Heart right ventricle (tissue), 16 donors: ENCODE measurements at regions of chr1 and their contacts with region 1.

Region 1: GRCh38 chr1:21685946-21686678 is 17.0 kb upstream of the RAP1GAP start:
- DNase-seq: no peak
- ATAC-seq: no peak
- H3K4me3 ChIP-seq: no peak overlapping the region
- H3K27ac ChIP-seq: no peak overlapping the region
- H3K4me1 ChIP-seq: no peaks in the 10 kb centered on the region
- H3K27me3 ChIP-seq: no peaks in the 10 kb centered on the region
- CTCF ChIP-seq: no peak

Region 2: DNA sequence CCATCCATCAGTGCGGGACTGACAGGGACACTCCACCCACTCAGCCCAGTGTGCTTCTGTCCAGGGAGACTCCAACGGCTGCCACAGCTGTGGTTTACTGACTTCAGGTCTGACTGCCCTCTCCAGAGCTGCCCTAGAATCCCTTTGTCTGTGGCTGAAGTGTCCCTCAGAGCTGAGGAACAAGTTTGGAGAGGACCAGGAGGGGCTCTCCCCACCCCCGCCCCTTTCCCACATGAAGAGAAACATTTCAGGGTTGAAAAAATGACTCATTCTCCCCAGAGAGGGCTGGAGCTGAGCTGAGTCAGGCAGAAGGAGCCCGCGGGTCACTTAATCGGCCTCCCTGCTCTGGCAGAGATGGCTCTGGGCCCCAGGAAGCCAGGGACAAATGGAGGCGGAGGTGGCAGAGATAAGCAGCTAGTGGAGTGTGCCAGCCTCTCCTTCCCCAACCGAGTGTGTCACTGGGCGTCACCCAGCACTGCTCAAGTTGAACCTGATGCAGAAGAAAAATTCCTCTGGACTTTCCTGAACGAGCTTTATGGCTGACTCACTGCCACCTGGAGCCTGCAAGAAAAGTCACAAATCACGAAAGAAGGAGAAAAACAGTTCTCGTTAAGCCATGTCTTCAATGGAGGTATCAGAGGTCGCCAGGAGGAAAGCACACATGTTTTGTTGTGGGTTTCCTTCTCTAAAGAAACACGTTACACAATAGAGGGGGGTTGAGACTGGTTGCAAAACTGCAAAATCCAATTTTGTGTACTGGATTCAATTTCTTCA is 361.6 kb before region 1 on chr1:
- intact Hi-C with region 1: no loop called
- DNase-seq: peak; percentile 77 to 80
- ATAC-seq: peak; percentile 65 to 85 (median 76)
- H3K4me3 ChIP-seq: peak overlapping the region in 1 of 10 donors; percentile 0
- H3K27ac ChIP-seq: peak overlapping the region; percentile 63 to 92 (median 86)
- H3K4me1 ChIP-seq: peaks cover 57 to 87% (median 80%) of the 10 kb centered on the region in 9 donors
- H3K27me3 ChIP-seq: no peaks in the 10 kb centered on the region
- CTCF ChIP-seq: peak in 1 of 9 donors; percentile 12

Region 3: GRCh38 chr1:21736876-21737275 is 50.8 kb after region 1 on chr1:
- intact Hi-C with region 1: loop called in 1 of 10 experiments (anchors 5 kb)
- DNase-seq: no peak
- ATAC-seq: no peak
- H3K4me3 ChIP-seq: no peak overlapping the region
- H3K27ac ChIP-seq: no peak overlapping the region
- H3K4me1 ChIP-seq: no peaks in the 10 kb centered on the region
- H3K27me3 ChIP-seq: no peaks in the 10 kb centered on the region
- CTCF ChIP-seq: no peak